ENCODE measurements at regions of chr1 and their contacts with region 1.

Region 1: DNA sequence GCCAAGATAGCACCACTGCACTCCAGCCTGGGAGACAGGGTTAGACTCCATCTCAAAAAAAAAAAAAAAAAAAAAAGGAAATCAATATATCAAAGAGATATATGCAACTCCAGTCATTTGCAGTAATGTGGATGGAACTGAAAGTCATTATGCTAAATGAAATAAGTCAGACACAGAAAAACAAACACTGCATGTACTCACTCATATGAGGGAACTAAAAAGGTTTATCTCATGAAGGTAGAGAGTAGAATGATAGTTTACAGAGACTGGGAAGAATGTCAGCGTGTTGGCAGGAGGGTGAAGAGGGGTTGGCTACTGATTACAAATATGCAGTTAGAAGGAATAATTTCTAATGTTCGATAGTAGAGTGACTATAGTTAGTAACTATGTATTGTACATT is 13.2 kb downstream of the HSD11B1 start:
- DNase-seq: no peak
- H3K4me3 Mint-ChIP-seq: no peak overlapping the region
- H3K27ac Mint-ChIP-seq: peak overlapping the region; percentile 91
- H3K4me1 Mint-ChIP-seq: peaks cover 61% of the 10 kb centered on the region
- H3K27me3 Mint-ChIP-seq: no peaks in the 10 kb centered on the region

Region 2: GRCh38 chr1:209688746-209689234 is 29.0 kb before region 1 on chr1:
- intact Hi-C with region 1: no loop called
- DNase-seq: no peak
- H3K4me3 Mint-ChIP-seq: no peak overlapping the region
- H3K27ac Mint-ChIP-seq: no peak overlapping the region
- H3K4me1 Mint-ChIP-seq: peaks cover 66% of the 10 kb centered on the region
- H3K27me3 Mint-ChIP-seq: no peaks in the 10 kb centered on the region

Region 3: DNA sequence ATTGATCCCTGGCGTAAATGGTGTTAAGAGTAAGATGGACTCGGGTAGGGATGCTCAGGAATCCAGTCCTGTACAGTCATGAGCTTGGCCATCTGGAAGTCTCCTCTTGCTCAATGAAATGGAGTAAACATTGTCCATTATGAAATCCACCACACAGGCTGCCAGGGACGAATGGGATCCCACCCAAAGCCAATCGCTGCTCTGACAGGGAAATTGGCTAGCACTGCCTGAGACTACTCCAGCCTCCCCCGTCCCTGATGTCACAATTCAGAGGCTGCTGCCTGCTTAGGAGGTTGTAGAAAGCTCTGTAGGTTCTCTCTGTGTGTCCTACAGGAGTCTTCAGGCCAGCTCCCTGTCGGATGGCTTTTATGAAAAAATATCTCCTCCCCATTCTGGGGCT is 13.2 kb before region 1 on chr1 and contains the start of gene HSD11B1:
- intact Hi-C with region 1: loop called (anchors 1 kb)
- DNase-seq: no peak
- H3K4me3 Mint-ChIP-seq: peak within 1 kb of the TSS; percentile 58
- H3K27ac Mint-ChIP-seq: peak within 1 kb of the TSS; percentile 80
- H3K4me1 Mint-ChIP-seq: peaks cover 72% of the 10 kb centered on the region
- H3K27me3 Mint-ChIP-seq: no peaks in the 10 kb centered on the region
- total RNA-seq, gene HSD11B1: 15.9 and 17.9 TPM in 2 replicates

Region 4: GRCh38 chr1:209736490-209737117 is 18.8 kb after region 1 on chr1:
- intact Hi-C with region 1: loop called (anchors 2 kb)
- DNase-seq: no peak
- H3K4me3 Mint-ChIP-seq: no peak overlapping the region
- H3K27ac Mint-ChIP-seq: peak overlapping the region; percentile 89
- H3K4me1 Mint-ChIP-seq: peaks cover 51% of the 10 kb centered on the region
- H3K27me3 Mint-ChIP-seq: no peaks in the 10 kb centered on the region

Measured in activated T-helper 1 cell treated with anti-CD3 and anti-CD28 coated beads, Interleukin-12 subunit alpha, Interleukin-12 subunit beta, Interleukin-2, Interleukin-4 antibody, amounts not matched to agents 30 ng/mL and 10 ng/mL and 1 ng/mL, durations not matched to agents 14 hours and 24 hours and 36 hours (primary cell).